PC-9 (cell line): ENCODE measurements at regions of chr11 and their contacts with region 1.

Region 1: DNA sequence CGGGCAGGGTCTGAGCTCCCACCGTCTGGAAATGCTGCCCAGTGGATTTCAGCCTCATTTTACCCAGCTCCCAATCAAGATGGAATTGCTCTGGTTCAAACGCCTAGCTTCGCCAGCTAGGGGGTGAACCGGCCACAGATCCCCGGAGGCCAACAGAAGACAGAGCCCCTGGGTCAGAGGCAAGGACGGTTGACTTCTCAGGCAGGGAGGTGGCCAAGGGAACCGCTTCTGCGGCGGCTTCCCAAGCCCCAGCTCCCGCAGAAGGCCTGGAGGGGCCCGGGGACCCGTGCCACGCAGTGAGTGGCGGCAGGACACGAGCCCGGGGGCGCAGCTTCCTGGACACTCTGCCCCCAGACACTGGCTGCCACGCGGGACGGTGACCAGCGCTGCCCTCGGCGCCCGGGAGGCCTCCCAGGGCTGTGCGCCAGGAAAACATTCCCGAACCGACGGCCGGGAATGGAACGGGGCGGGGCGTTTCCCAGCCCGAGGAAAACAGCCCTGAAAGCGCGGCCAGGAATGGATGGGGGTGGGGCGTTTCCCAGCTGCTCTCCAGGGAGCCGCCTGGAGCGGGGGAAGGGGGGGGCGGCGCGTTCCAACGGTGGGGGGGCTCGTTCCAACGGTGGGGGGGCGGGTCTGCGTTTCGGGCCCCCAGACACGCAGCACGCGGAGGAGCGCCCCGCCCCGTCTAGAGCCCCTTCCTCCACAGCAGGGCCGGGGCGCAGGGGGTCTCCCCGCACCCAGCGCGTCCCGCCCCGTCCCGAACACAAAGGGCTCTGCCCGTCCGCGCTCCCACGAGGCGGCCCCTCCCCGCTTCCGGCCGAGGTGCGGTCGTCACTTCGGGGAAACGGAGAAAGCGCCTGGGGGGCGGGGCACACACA is 13.5 kb upstream of the B4GALNT4 start:
- DNase-seq: peak in 1 of 2 experiments; percentile 89
- H3K4me3 ChIP-seq: peak overlapping the region; percentile 44; the same call in 1 of the 2 replicates
- H3K27ac ChIP-seq: no peak overlapping the region
- H3K4me1 ChIP-seq: no peaks in the 10 kb centered on the region
- H3K27me3 ChIP-seq: no peaks in the 10 kb centered on the region
- CTCF ChIP-seq: no peak

Region 2: GRCh38 chr11:304915-305843 is 50.6 kb before region 1 on chr11:
- CTCF ChIA-PET with region 1: no interaction called
- POLR2A ChIA-PET with region 1: interaction called, 14 read pairs
- intact Hi-C with region 1: loop called (anchors 5 kb)
- DNase-seq: peak in 1 of 2 experiments; percentile 54
- H3K4me3 ChIP-seq: no peak overlapping the region
- H3K27ac ChIP-seq: no peak overlapping the region
- H3K4me1 ChIP-seq: peaks cover 10% of the 10 kb centered on the region
- H3K27me3 ChIP-seq: no peaks in the 10 kb centered on the region
- CTCF ChIP-seq: peak; percentile 61

Region 3: GRCh38 chr11:324156-324555 is 31.7 kb before region 1 on chr11:
- CTCF ChIA-PET with region 1: no interaction called
- POLR2A ChIA-PET with region 1: no interaction called
- intact Hi-C with region 1: loop called (anchors 5 kb)
- DNase-seq: no peak
- H3K4me3 ChIP-seq: no peak overlapping the region
- H3K27ac ChIP-seq: no peak overlapping the region
- H3K4me1 ChIP-seq: no peaks in the 10 kb centered on the region
- H3K27me3 ChIP-seq: no peaks in the 10 kb centered on the region
- CTCF ChIP-seq: no peak